A673 (cell line): ENCODE measurements at regions of chr7 and their contacts with region 1.

Region 1: GRCh38 chr7:115475761-115476385 is 554.0 kb downstream of the MDFIC start:
- DNase-seq: peak; percentile 42
- H3K4me3 ChIP-seq: no peak overlapping the region
- H3K27ac ChIP-seq: no peak overlapping the region
- H3K4me1 ChIP-seq: no peaks in the 10 kb centered on the region
- H3K27me3 ChIP-seq: no peaks in the 10 kb centered on the region
- CTCF ChIP-seq: peak; percentile 43

Region 2: DNA sequence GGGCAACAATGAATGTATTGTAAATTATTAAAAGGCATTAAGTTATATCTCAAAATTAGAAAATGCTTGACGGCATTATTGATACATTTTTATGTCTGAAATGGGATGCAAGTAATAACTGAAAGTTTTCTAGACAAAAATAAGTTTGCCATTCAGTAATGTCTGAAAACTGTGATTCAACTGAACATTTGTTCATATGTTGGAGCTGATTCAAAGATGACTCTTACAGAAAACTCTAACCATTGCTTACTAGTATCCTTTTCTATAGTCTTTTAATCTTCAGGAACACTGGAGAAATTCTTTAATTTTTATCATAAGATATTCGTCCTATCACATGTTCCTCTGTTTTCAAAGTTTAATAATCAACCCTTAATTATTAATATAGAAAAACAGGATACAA is 625.8 kb after region 1 on chr7:
- CTCF ChIA-PET with region 1: no interaction called
- POLR2A ChIA-PET with region 1: no interaction called
- intact Hi-C with region 1: loop called (anchors 10 kb)
- DNase-seq: no peak
- H3K4me3 ChIP-seq: no peak overlapping the region
- H3K27ac ChIP-seq: no peak overlapping the region
- H3K4me1 ChIP-seq: no peaks in the 10 kb centered on the region
- H3K27me3 ChIP-seq: no peaks in the 10 kb centered on the region
- CTCF ChIP-seq: no peak